ENCODE measurements at regions of chr9 and their contacts with region 1.

Region 1: DNA sequence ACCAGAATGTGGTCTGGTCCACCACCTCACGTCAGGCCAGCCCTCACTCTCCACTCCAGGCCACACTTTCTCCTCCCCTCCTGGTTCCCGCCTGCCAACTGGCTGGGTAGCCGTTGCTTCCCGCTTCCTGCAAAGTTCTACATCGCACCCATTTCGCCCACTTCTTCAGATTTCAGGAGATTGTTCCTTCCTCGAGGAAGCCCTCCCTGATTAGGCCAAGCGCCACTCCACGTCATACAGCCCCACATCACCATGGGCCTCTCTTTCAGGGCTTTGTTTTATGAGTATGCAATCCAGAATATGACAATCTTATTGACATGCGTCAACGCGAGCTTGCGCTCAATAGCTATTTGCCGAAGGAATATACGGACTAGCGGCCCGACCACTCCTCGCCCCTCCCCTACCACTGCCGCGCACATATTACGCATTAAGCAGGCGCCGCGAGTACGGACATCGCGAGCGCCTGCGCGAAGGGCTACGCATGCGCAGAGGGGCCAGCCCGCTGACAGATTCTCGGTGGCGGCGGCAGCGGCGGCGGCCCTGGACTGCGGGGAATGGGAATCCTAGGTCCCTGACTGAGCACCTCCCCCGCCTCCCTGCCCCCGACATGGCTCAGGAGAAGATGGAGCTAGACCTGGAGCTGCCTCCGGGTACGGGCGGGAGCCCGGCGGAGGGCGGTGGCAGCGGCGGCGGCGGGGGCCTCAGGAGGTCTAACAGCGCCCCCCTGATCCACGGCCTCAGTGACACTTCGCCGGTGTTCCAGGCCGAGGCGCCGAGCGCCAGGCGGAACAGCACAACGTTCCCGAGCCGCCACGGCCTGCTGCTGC is 74.7 kb downstream of the PIP5K1B start:
- DNase-seq: peak; percentile 99

Region 2: GRCh38 chr9:68637020-68637419 is 142.8 kb before region 1 on chr9:
- intact Hi-C with region 1: no loop called
- DNase-seq: no peak

Region 3: DNA sequence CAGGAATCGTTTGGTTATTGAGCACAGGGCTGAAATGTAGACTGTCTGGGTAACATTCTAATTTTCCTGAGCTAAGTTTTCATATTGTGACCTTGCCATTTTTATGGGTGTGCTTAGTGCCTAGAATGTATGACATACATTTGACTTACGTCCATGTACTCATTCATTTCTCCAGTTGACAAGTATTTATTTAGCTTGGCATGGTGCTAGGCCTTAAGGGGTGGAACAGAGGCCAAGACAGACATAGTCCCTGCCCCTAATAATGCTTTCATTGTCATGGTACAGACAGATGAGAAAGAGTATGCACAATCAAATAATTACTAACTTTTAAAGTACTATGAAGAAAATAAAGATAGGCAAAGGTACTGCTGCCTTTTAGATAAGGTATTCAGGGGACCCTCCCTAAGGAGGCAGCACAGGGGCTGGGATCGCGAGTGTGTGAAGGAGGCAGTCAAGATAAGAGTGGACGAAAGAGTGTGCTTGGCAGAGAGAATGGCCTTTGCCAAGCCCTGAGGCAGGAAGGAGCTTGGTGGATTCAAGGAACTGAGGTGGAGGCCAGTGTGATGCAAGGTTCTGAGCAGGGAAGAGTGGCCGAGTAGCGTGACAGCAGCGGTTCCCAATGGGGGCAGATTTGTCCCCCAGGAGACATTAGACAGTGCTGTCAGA is 53.2 kb after region 1 on chr9:
- intact Hi-C with region 1: loop called in 1 of 2 experiments (anchors 10 kb)
- DNase-seq: no peak

Region 4: GRCh38 chr9:70093944-70094343 is 1314.2 kb after region 1 on chr9:
- intact Hi-C with region 1: no loop called
- DNase-seq: no peak